Mammary epithelial cell (primary cell): ENCODE measurements at regions of chr10 and their contacts with region 1.

Region 1: GRCh38 chr10:89954787-89955566 is 253.6 kb downstream of the KIF20B start:
- DNase-seq: no peak
- H3K4me3 ChIP-seq: no peak overlapping the region
- H3K27ac ChIP-seq: no peak overlapping the region
- H3K4me1 ChIP-seq: no peaks in the 10 kb centered on the region
- H3K27me3 ChIP-seq: no peaks in the 10 kb centered on the region
- CTCF ChIP-seq: peak; percentile 30 to 39

Region 2: GRCh38 chr10:90138844-90139243 is 183.9 kb after region 1 on chr10:
- CTCF ChIA-PET with region 1: interaction called, 3 read pairs
- dilution Hi-C with region 1: no loop called
- in situ Hi-C with region 1: no loop called
- intact Hi-C with region 1: loop called (anchors 2 kb)
- DNase-seq: no peak
- H3K4me3 ChIP-seq: no peak overlapping the region
- H3K27ac ChIP-seq: no peak overlapping the region
- H3K4me1 ChIP-seq: no peaks in the 10 kb centered on the region
- H3K27me3 ChIP-seq: no peaks in the 10 kb centered on the region
- CTCF ChIP-seq: peak; percentile 52 to 53